CD14-positive monocyte (primary cell): ENCODE measurements at regions of chr5 and their contacts with region 1.

Region 1: GRCh38 chr5:134140530-134141201 is 26.2 kb downstream of the TCF7 start:
- DNase-seq: peak; percentile 58 to 68 (median 60)
- H3K4me3 ChIP-seq: no peak overlapping the region
- H3K4me3 Mint-ChIP-seq: no peak overlapping the region
- H3K27ac ChIP-seq: no peak overlapping the region
- H3K27ac Mint-ChIP-seq: peak overlapping the region in 1 of 7 donors; percentile 37
- H3K4me1 ChIP-seq: peaks cover 3 to 10% of the 10 kb centered on the region in 2 donors
- H3K4me1 Mint-ChIP-seq: peaks cover 14% of the 10 kb centered on the region
- H3K27me3 ChIP-seq: no peaks in the 10 kb centered on the region
- H3K27me3 Mint-ChIP-seq: peaks cover 0 to 2% (median 0%) of the 10 kb centered on the region in 3 donors
- CTCF ChIP-seq: peak; percentile 88

Region 2: GRCh38 chr5:134101686-134102439 is 38.8 kb before region 1 on chr5:
- intact Hi-C with region 1: loop called in 1 of 2 experiments (anchors 5 kb)
- DNase-seq: peak; percentile 36 to 55 (median 49)
- H3K4me3 ChIP-seq: no peak overlapping the region
- H3K4me3 Mint-ChIP-seq: no peak overlapping the region
- H3K27ac ChIP-seq: no peak overlapping the region
- H3K27ac Mint-ChIP-seq: no peak overlapping the region
- H3K4me1 ChIP-seq: no peaks in the 10 kb centered on the region
- H3K4me1 Mint-ChIP-seq: peaks cover 1% of the 10 kb centered on the region
- H3K27me3 ChIP-seq: no peaks in the 10 kb centered on the region
- H3K27me3 Mint-ChIP-seq: peaks cover 2 to 7% (median 5%) of the 10 kb centered on the region in 3 donors
- CTCF ChIP-seq: peak; percentile 88

Region 3: GRCh38 chr5:134209477-134210240 is 69.0 kb after region 1 on chr5:
- intact Hi-C with region 1: no loop called
- DNase-seq: no peak
- H3K4me3 ChIP-seq: no peak overlapping the region
- H3K4me3 Mint-ChIP-seq: no peak overlapping the region
- H3K27ac ChIP-seq: no peak overlapping the region
- H3K27ac Mint-ChIP-seq: peak overlapping the region in 2 of 7 donors; percentile 2 to 37
- H3K4me1 ChIP-seq: no peaks in the 10 kb centered on the region
- H3K4me1 Mint-ChIP-seq: peaks cover 11% of the 10 kb centered on the region
- H3K27me3 ChIP-seq: no peaks in the 10 kb centered on the region
- H3K27me3 Mint-ChIP-seq: no peaks in the 10 kb centered on the region
- CTCF ChIP-seq: no peak

Region 4: GRCh38 chr5:134543820-134544614 is 403.4 kb after region 1 on chr5:
- intact Hi-C with region 1: no loop called
- DNase-seq: peak; percentile 61 to 84 (median 66)
- H3K4me3 ChIP-seq: peak overlapping the region in 1 of 3 experiments; percentile 4
- H3K4me3 Mint-ChIP-seq: peak overlapping the region; percentile 45 to 57
- H3K27ac ChIP-seq: peak overlapping the region; percentile 10 to 58
- H3K27ac Mint-ChIP-seq: peak overlapping the region; percentile 72 to 90 (median 84)
- H3K4me1 ChIP-seq: peaks cover 22 to 26% of the 10 kb centered on the region in 2 donors
- H3K4me1 Mint-ChIP-seq: peaks cover 24% of the 10 kb centered on the region
- H3K27me3 ChIP-seq: no peaks in the 10 kb centered on the region
- H3K27me3 Mint-ChIP-seq: no peaks in the 10 kb centered on the region
- CTCF ChIP-seq: no peak